OCI-LY7 (cell line): ENCODE measurements at regions of chr2 and their contacts with region 1.

Region 1: GRCh38 chr2:68467077-68467960 is at the starts of genes APLF and FBXO48:
- DNase-seq: peak; percentile 99
- H3K4me3 ChIP-seq: peak within 1 kb of the TSS; percentile 82
- H3K27ac ChIP-seq: peak within 1 kb of the TSS; percentile 49
- H3K4me1 ChIP-seq: peaks cover 41% of the 10 kb centered on the region
- CTCF ChIP-seq: no peak
- total RNA-seq, gene APLF: 6.1 and 8.8 TPM in 2 replicates
- total RNA-seq, gene FBXO48: 1.5 and 1.8 TPM in 2 replicates

Region 2: DNA sequence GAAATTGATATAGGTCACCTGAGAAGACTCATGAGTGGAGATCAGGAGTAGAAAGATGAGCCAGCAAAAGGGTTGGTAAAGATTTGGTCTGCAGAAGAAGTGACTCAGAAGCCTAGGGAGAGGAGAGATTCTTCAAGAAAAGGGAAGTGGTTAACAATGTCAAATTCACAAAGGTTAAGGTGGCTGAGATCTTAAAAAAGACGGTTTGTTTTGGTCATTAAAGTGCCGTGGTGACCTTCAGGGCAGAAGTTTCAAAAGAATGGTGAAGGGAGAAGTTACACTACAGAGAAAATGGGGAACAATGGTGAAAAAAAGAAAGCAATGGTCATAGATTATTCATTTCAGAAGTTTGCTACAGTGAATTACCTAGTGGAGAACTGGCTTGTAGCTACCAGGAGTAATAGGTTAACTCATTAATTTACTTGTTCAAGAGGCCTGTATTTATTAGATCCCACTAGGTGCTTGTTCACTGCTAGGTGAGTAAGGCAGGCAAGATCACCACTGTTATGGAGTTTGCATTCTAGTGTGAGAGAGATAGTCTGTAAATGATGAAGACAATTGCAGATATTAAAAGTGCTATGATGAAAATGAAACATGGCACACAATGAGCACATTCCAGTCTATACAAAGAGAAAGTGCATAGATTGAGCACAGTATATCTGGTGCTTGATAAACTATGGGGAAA is 43.2 kb before region 1 on chr2:
- CTCF ChIA-PET with region 1: no interaction called
- POLR2A ChIA-PET with region 1: no interaction called
- intact Hi-C with region 1: no loop called
- DNase-seq: peak; percentile 81
- H3K4me3 ChIP-seq: peak overlapping the region; percentile 39
- H3K27ac ChIP-seq: peak overlapping the region; percentile 88
- H3K4me1 ChIP-seq: peaks cover 90% of the 10 kb centered on the region
- CTCF ChIP-seq: no peak

Region 3: DNA sequence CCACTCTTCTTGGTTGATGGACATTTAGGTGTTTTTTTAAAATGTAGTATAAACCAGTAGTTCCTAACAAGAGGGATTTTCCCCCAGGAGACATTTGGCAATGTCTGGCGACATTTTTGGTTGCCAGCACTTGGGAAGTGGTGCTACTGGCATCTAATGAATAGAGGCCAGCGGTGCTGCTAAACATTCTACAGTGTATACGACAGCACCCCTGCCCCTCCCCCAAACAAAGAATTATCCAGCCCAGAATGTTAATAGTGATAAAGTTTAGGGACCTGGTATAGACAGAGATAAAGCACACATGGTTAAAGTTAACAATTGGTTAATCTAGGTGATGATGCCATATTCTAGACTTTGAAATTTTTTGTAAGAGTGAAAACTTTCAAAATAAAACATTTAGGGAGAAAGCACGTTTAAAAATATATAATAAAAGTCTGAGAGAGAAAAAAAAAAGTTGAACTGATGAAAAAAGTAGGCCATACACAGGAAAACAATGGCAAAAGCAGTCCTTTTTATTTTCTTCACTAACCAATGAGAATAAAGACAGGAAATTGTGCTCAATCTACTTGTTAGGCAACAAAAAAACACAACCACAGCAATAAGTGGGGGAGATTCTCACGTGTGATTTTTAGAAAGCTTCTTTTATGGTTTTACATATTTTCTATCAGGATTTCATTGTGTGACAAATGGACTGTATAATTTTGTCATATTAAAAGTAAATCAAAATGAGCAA is 15.0 kb before region 1 on chr2:
- CTCF ChIA-PET with region 1: interaction called, 3 read pairs
- POLR2A ChIA-PET with region 1: interaction called, 10 read pairs
- intact Hi-C with region 1: no loop called
- DNase-seq: no peak
- H3K4me3 ChIP-seq: no peak overlapping the region
- H3K27ac ChIP-seq: no peak overlapping the region
- H3K4me1 ChIP-seq: peaks cover 8% of the 10 kb centered on the region
- CTCF ChIP-seq: no peak

Region 4: GRCh38 chr2:68689553-68690537 is 222.5 kb after region 1 on chr2:
- CTCF ChIA-PET with region 1: no interaction called
- POLR2A ChIA-PET with region 1: interaction called, 12 read pairs
- intact Hi-C with region 1: loop called (anchors 5 kb)
- DNase-seq: peak; percentile 92
- H3K4me3 ChIP-seq: peak overlapping the region; percentile 61
- H3K27ac ChIP-seq: peak overlapping the region; percentile 98
- H3K4me1 ChIP-seq: peaks cover 61% of the 10 kb centered on the region
- CTCF ChIP-seq: no peak

Region 5: GRCh38 chr2:68766376-68766845 is 299.1 kb after region 1 on chr2:
- CTCF ChIA-PET with region 1: interaction called, 4 read pairs
- POLR2A ChIA-PET with region 1: interaction called, 4 read pairs
- intact Hi-C with region 1: loop called (anchors 5 kb)
- DNase-seq: peak; percentile 84
- H3K4me3 ChIP-seq: peak overlapping the region; percentile 67
- H3K27ac ChIP-seq: peak overlapping the region; percentile 93
- H3K4me1 ChIP-seq: peaks cover 100% of the 10 kb centered on the region
- CTCF ChIP-seq: no peak; the same call in 1 of the 2 replicates

Region 6: GRCh38 chr2:68925295-68925896 is 458.1 kb after region 1 on chr2:
- CTCF ChIA-PET with region 1: interaction called, 3 read pairs
- POLR2A ChIA-PET with region 1: interaction called, 4 read pairs
- intact Hi-C with region 1: loop called (anchors 1 kb)
- DNase-seq: peak; percentile 79
- H3K4me3 ChIP-seq: no peak overlapping the region
- H3K27ac ChIP-seq: no peak overlapping the region
- H3K4me1 ChIP-seq: peaks cover 4% of the 10 kb centered on the region
- CTCF ChIP-seq: peak; percentile 99